GM12878 (cell line): ENCODE measurements at regions of chr19 and their contacts with region 1.

Region 1: GRCh38 chr19:49473868-49474544 is at the start of gene FLT3LG:
- DNase-seq: no peak
- ATAC-seq: peak; percentile 66
- H3K4me3 ChIP-seq: peak within 1 kb of the TSS; percentile 82
- H3K27ac ChIP-seq: peak within 1 kb of the TSS; percentile 66
- H3K4me1 ChIP-seq: peaks cover 32% of the 10 kb centered on the region
- H3K27me3 ChIP-seq: no peaks in the 10 kb centered on the region
- CTCF ChIP-seq: peak; percentile 91 to 97 (median 94)
- EP300 ChIP-seq: no peak
- POLR2A ChIP-seq: peak; percentile 69; the same call in 1 of the 2 replicates
- RAD21 ChIP-seq: peak; percentile 63
- polyA plus RNA-seq, gene FLT3LG: 0.68 to 1.6 TPM

Region 2: GRCh38 chr19:49443366-49444099 is 30.5 kb before region 1 on chr19:
- CTCF ChIA-PET with region 1: interaction called, 29 read pairs
- POLR2A ChIA-PET with region 1: interaction called, 9 read pairs
- RAD21 ChIA-PET with region 1: interaction called, 7 read pairs
- SMC1A ChIA-PET with region 1: interaction called, 11 read pairs
- in situ Hi-C with region 1: no loop called
- intact Hi-C with region 1: loop called (anchors 1 kb)
- DNase-seq: peak; percentile 80
- ATAC-seq: peak; percentile 92
- H3K4me3 ChIP-seq: peak overlapping the region; percentile 81
- H3K27ac ChIP-seq: peak overlapping the region; percentile 21; the same call in 1 of the 2 replicates
- H3K4me1 ChIP-seq: no peaks in the 10 kb centered on the region
- H3K27me3 ChIP-seq: peaks cover 9 to 20% of the 10 kb centered on the region in 2 experiments
- CTCF ChIP-seq: peak; percentile 70 to 92 (median 90)
- EP300 ChIP-seq: no peak
- POLR2A ChIP-seq: no peak
- RAD21 ChIP-seq: peak; percentile 78

Region 3: DNA sequence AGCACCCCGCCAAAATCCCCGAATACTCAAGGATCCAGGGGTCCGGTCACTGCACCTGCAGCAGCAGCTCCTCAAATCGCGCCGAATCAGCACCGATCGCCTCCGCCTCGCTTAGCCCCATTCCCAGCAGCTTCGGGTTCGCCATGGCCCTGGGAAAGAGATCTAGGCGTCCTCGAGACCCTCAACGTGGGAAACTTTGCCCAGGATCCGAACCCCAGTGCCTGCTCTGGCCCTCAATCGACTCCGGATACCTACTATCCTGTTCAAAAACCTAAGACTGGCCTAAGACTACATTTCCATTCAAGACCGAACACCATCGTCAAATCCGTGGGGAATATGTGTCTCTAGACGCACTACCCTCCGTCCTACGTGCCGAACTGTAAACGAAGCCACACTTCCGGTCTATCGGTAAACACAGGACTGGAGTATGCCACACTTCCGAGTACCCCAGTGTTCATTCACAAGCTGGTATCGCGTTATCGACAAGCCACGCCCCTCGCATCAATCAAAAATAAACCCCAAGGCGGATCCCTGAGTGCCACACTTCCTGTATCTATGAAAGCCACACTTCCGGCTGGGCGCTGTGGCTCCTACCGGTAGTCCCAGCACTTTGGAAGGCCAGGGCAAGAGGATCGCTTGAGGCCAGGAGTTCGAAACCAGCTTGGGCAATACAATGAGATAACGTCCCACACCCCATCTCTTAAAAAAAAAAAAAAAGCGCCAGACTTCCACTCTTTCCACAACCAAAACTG is 22.4 kb before region 1 on chr19 and contains the start of gene PIH1D1:
- CTCF ChIA-PET with region 1: interaction called, 46 read pairs
- POLR2A ChIA-PET with region 1: interaction called, 81 read pairs
- RAD21 ChIA-PET with region 1: interaction called, 90 read pairs
- SMC1A ChIA-PET with region 1: interaction called, 53 read pairs
- in situ Hi-C with region 1: no loop called
- intact Hi-C with region 1: loop called (anchors 1 kb)
- DNase-seq: peak; percentile 99
- ATAC-seq: peak; percentile 77
- H3K4me3 ChIP-seq: peak within 1 kb of the TSS; percentile 85
- H3K27ac ChIP-seq: peak within 1 kb of the TSS; percentile 100
- H3K4me1 ChIP-seq: peaks cover 12% of the 10 kb centered on the region
- H3K27me3 ChIP-seq: no peaks in the 10 kb centered on the region
- CTCF ChIP-seq: no peak
- EP300 ChIP-seq: no peak
- POLR2A ChIP-seq: peak; percentile 80
- RAD21 ChIP-seq: no peak
- polyA plus RNA-seq, gene PIH1D1: 16.1 to 39.9 TPM

Region 4: GRCh38 chr19:49497047-49497788 is 23.2 kb after region 1 on chr19:
- CTCF ChIA-PET with region 1: interaction called, 11 read pairs
- POLR2A ChIA-PET with region 1: interaction called, 3 read pairs
- RAD21 ChIA-PET with region 1: no interaction called
- SMC1A ChIA-PET with region 1: interaction called, 3 read pairs
- in situ Hi-C with region 1: no loop called
- intact Hi-C with region 1: no loop called
- DNase-seq: no peak
- ATAC-seq: peak; percentile 41
- H3K4me3 ChIP-seq: peak overlapping the region; percentile 79
- H3K27ac ChIP-seq: peak overlapping the region; percentile 85
- H3K4me1 ChIP-seq: peaks cover 35% of the 10 kb centered on the region
- H3K27me3 ChIP-seq: no peaks in the 10 kb centered on the region
- CTCF ChIP-seq: no peak
- EP300 ChIP-seq: no peak
- POLR2A ChIP-seq: peak; percentile 74
- RAD21 ChIP-seq: no peak

Region 5: GRCh38 chr19:49546825-49547565 is 73.0 kb after region 1 on chr19:
- CTCF ChIA-PET with region 1: interaction called, 22 read pairs
- POLR2A ChIA-PET with region 1: no interaction called
- RAD21 ChIA-PET with region 1: interaction called, 16 read pairs
- SMC1A ChIA-PET with region 1: interaction called, 11 read pairs
- in situ Hi-C with region 1: no loop called
- intact Hi-C with region 1: loop called (anchors 2 kb)
- DNase-seq: peak; percentile 42
- ATAC-seq: peak; percentile 85
- H3K4me3 ChIP-seq: no peak overlapping the region
- H3K27ac ChIP-seq: no peak overlapping the region
- H3K4me1 ChIP-seq: no peaks in the 10 kb centered on the region
- H3K27me3 ChIP-seq: no peaks in the 10 kb centered on the region
- CTCF ChIP-seq: peak; percentile 75 to 90 (median 86)
- EP300 ChIP-seq: no peak
- POLR2A ChIP-seq: no peak
- RAD21 ChIP-seq: peak; percentile 91